A673 (cell line): ENCODE measurements at regions of chr11 and their contacts with region 1.

Region 1: DNA sequence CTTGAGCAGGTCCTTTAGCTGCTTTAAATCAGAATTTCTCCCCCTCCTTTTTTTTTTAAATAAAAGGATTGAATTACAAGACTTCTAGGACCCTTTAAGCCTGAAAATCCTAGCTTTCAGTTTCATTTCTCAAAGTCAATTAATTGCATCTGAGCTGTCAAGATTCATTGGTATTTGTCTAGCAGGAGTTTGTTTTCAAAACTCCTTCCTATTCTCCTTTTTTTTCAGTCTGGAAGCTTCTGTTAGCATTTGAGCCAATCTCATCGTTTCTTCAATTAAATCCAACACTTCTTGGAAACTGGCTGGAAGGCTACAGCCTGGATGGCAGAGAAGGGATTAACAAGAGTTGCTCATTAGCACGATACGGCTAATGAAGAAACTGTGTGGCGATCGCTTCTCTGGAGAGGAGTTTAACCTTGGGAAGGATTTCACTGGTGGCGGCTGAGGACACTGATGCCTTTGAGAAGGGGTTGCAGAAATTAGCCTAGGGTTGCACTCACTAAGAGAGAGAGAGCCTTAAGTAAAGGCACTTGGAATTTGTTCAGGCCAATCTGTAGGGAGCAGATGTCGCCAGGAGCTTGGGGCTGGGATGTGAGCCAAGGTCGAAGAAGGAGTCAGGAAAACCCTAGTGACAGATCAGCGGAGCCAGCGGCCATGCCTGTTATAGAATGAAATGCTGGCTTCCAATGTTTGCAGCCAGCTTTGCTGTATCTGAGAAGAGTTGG is 43.8 kb upstream of the API5 start:
- DNase-seq: no peak
- H3K4me3 ChIP-seq: no peak overlapping the region
- H3K27ac ChIP-seq: no peak overlapping the region
- H3K4me1 ChIP-seq: peaks cover 17% of the 10 kb centered on the region
- H3K27me3 ChIP-seq: no peaks in the 10 kb centered on the region
- CTCF ChIP-seq: no peak

Region 2: DNA sequence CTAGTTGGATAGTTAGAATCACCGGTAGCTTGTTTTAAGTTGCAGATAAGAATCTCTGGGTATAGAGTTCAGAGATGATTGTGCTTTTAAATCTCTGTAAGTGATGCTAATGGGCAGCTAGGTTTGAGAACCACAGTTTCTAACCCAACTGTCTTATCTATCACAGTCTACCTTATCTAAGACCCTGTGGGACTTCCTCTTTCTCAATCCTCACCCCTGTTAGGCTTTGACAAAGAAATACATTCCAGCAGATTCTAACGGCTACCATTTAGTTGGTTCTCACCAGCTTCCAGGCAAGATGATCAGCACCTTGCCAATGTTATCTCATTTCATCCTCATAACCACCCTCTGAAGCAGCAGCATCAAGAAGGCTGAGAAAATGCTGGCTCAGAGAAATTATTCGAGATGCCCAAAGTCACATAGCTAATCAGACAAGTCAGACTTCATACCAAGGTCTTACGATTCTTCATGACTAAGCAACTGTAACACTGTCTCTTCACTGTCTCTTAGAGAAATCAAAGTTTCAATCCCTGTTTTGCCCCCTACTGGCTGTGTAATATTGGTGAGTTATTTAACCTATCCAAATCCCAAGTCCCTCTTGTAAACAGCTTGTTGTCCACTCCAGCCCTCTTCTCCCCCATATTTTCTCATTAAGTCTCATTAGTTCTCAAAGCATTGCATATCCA is 148.6 kb before region 1 on chr11:
- CTCF ChIA-PET with region 1: no interaction called
- POLR2A ChIA-PET with region 1: no interaction called
- intact Hi-C with region 1: loop called (anchors 5 kb)
- DNase-seq: peak; percentile 68
- H3K4me3 ChIP-seq: no peak overlapping the region
- H3K27ac ChIP-seq: no peak overlapping the region
- H3K4me1 ChIP-seq: peaks cover 21% of the 10 kb centered on the region
- H3K27me3 ChIP-seq: no peaks in the 10 kb centered on the region
- CTCF ChIP-seq: peak; percentile 54

Region 3: DNA sequence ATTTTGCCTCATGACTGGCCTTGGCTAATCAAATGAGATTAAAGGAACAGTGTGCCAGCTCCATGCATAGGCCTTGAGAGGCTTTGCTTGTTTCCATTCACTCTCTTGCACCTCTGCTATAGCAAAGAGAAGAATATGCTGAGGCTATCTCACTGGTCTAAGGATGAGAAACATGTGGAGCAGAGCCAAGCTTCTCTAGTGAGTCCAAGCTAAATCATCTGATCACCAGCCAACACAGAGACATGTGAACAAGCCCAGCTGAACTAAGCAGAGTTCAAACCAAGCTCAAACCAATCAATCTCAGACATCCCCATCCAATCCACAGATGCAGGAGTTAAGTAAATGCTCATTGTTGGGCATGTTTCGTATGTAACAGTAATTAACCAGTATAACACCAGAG is 25.6 kb before region 1 on chr11:
- CTCF ChIA-PET with region 1: no interaction called
- POLR2A ChIA-PET with region 1: no interaction called
- intact Hi-C with region 1: no loop called
- DNase-seq: no peak
- H3K4me3 ChIP-seq: no peak overlapping the region
- H3K27ac ChIP-seq: no peak overlapping the region
- H3K4me1 ChIP-seq: no peaks in the 10 kb centered on the region
- H3K27me3 ChIP-seq: no peaks in the 10 kb centered on the region
- CTCF ChIP-seq: no peak